ENCODE measurements at regions of chr20 and their contacts with region 1.

Region 1: GRCh38 chr20:23245553-23246181 is 104.9 kb upstream of the NXT1 start:
- DNase-seq: peak; percentile 68
- ATAC-seq: peak; percentile 95
- H3K4me3 Mint-ChIP-seq: no peak overlapping the region
- H3K27ac Mint-ChIP-seq: no peak overlapping the region
- H3K4me1 Mint-ChIP-seq: no peaks in the 10 kb centered on the region
- H3K27me3 Mint-ChIP-seq: no peaks in the 10 kb centered on the region; the same call in 1 of the 2 replicates
- CTCF ChIP-seq: 0 out of 2 replicates have a peak, but pooled peaks have one; percentile 14

Region 2: GRCh38 chr20:23235173-23236027 is 10.3 kb before region 1 on chr20:
- CTCF ChIA-PET with region 1: interaction called, 37 read pairs
- POLR2A ChIA-PET with region 1: no interaction called
- DNase-seq: peak; percentile 78
- ATAC-seq: peak; percentile 100
- H3K4me3 Mint-ChIP-seq: no peak overlapping the region
- H3K27ac Mint-ChIP-seq: no peak overlapping the region
- H3K4me1 Mint-ChIP-seq: no peaks in the 10 kb centered on the region
- H3K27me3 Mint-ChIP-seq: peaks cover 24% of the 10 kb centered on the region
- CTCF ChIP-seq: peak; percentile 87

Region 3: DNA sequence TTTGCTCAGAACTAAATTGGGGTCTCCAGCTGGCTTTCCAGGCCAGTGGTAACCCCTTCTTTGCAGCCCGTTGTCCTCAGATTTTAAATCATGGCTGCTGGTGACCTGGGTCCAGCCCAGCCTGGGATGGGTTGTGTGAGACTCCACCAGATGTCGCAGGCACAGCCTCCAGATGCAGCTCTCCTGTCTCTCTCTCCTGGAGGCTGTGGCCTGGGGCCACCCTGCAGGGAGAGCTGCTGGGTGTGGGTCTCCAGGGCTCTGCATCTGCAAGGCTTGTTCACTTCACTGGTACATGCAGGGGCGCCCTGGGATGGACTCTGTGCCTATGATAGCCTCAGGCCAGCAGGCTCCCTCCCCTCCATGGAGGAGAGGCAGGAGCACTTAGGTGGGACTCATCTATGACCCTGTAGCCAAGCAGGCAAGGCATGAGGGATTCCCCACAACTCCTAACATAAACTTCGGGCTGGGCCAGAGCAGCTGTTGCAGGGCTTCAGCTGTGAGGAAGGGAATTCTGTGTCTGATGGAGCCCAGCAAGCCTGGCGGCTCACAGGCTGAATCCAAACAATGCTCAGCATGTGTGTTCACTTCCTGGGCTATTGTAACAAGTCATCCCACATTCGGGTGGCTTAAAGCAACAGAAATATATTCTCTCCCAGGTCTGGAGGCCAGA is 10.2 kb after region 1 on chr20:
- CTCF ChIA-PET with region 1: interaction called, 13 read pairs
- POLR2A ChIA-PET with region 1: no interaction called
- DNase-seq: no peak
- ATAC-seq: 0 out of 2 replicates have a peak, but pooled peaks have one; percentile 26
- H3K4me3 Mint-ChIP-seq: no peak overlapping the region
- H3K27ac Mint-ChIP-seq: no peak overlapping the region
- H3K4me1 Mint-ChIP-seq: peaks cover 11% of the 10 kb centered on the region
- H3K27me3 Mint-ChIP-seq: no peaks in the 10 kb centered on the region
- CTCF ChIP-seq: no peak